ENCODE measurements at regions of chr19 and their contacts with region 1.

Region 1: DNA sequence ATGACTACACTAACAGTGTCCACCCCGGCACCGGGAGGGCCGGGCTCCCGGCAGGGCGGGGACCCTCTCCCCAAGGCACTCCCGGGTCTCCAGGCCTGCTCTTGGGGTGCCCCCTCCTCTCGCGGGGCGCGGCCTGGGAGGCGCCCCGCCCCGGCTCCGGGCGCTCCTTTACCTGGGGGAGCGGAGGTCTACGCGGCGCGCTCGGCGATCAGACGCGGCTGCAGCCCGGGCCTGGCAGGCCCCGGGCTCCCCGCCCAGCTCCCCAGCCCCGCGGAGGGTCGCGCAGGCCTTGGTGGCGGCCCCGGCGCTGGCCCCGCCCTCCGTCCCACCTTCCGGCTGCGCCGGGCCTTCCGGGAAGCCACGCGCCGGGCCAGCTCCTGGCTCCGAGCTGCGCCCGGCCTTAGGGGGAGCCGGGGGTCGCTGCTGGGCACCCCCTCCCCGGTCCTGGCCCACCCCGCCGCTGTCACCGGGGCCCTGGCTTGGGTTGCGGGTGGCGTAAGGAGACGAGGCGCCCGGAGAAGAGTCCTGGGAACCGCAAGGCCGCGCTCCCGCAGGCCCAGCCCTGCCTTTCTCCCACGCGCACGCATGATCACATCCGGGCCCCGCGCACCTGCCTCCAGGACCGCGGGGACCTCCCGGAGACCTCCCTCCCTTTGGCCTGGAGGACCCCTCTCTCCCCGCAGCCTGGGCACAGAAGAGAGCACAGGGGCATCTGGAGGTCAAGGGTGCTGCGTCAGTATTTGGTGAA is at the start of gene C19orf12:
- DNase-seq: peak; percentile 80
- ATAC-seq: peak; percentile 69
- H3K4me3 Mint-ChIP-seq: peak within 1 kb of the TSS; percentile 96
- H3K27ac Mint-ChIP-seq: peak within 1 kb of the TSS; percentile 98
- H3K4me1 Mint-ChIP-seq: peaks cover 53% of the 10 kb centered on the region
- H3K27me3 Mint-ChIP-seq: no peaks in the 10 kb centered on the region
- total RNA-seq, gene C19orf12: 43.6 to 44.1 TPM

Region 2: DNA sequence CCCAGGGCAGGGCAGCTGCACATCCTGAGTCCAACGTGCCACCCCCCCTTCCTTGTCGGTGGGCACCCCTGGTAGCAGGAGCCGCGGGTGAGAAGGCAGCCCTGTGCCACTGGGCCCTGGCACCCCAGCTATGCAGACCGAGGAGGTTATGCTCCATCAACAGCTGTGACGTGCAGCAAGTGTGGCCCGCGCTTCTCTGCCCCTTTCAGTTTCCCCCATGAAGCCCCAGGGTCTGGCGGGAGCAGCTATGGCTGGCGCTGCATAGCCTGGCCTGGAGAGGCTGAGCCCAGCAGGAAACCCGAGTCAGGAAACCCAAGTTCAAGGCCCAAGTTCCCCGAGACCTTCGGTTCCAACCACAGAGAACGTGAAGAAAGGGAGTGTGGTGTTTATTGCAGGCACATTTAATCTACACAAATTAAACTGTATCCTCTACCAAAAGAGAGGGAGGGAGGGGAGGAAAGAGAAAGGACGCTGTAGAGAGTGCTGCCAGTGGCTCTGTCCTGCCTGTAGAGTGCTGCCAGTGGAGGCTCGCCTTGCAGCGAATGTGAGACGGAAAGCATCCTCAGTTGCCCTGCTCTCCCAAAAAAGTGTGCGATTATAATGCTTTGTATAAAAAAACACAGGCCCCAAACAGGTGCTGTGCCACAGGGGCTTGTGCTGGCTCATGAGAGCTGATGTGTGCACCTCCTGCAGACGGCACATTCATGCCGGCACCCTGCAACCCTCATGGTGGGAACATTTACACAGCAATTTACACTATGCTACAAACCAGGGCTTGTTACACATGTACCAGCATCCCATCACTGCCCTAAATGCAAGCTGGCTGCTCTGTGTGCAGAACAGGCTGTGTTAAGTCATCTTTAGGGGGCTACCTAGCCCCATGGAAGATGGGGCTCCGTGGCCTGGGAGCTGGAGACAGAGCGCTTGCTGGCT is 92.7 kb before region 1 on chr19:
- CTCF ChIA-PET with region 1: interaction called, 25 read pairs
- DNase-seq: peak; percentile 73
- ATAC-seq: peak; percentile 48
- H3K4me3 Mint-ChIP-seq: peak overlapping the region; percentile 87
- H3K27ac Mint-ChIP-seq: peak overlapping the region; percentile 97
- H3K4me1 Mint-ChIP-seq: peaks cover 70% of the 10 kb centered on the region
- H3K27me3 Mint-ChIP-seq: no peaks in the 10 kb centered on the region

Region 3: DNA sequence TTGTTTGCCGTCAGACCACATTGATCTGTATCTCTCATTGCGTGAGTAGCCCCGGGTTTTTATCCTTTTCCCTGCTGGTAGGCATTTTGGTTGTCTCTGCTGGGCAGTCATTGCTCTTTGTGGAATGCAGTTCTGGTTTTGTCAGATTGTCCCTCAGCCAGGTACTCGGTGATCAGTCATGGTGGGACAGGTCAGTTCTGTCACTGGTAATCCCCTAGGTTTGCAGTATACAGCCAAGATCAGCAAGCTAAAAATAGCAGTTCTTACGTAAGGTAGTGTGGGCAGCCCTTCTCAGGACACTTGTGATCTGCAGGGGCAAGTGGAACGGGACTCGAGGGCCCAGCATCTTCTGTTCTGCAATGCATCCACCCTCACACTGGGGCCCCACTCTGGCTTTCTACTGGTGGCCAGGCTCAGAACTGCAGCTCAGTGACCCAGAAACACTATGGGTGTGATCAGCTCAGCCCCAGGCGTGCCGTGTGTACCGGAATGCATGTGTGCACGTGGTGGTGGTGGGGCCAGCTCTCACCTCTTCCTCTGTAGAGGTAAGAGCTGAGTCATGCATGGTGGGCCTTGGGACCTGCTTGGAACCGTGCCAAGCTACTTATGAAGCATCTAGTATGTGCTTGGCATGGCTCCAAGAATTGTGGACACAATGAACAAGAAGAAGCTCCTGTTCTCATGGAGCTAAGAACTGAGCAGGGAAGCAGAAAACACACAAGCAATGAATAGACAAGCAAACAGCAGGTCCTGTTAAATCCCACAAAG is 43.5 kb before region 1 on chr19:
- CTCF ChIA-PET with region 1: interaction called, 109 read pairs
- DNase-seq: peak; percentile 98
- ATAC-seq: peak; percentile 77
- H3K4me3 Mint-ChIP-seq: peak overlapping the region; percentile 64
- H3K27ac Mint-ChIP-seq: peak overlapping the region; percentile 90
- H3K4me1 Mint-ChIP-seq: peaks cover 91% of the 10 kb centered on the region
- H3K27me3 Mint-ChIP-seq: no peaks in the 10 kb centered on the region

Region 4: GRCh38 chr19:29694669-29695627 is 20.2 kb before region 1 on chr19:
- CTCF ChIA-PET with region 1: interaction called, 193 read pairs
- DNase-seq: peak; percentile 89
- ATAC-seq: peak; percentile 98
- H3K4me3 Mint-ChIP-seq: no peak overlapping the region
- H3K27ac Mint-ChIP-seq: peak overlapping the region; percentile 32
- H3K4me1 Mint-ChIP-seq: peaks cover 16% of the 10 kb centered on the region
- H3K27me3 Mint-ChIP-seq: no peaks in the 10 kb centered on the region

Region 5: DNA sequence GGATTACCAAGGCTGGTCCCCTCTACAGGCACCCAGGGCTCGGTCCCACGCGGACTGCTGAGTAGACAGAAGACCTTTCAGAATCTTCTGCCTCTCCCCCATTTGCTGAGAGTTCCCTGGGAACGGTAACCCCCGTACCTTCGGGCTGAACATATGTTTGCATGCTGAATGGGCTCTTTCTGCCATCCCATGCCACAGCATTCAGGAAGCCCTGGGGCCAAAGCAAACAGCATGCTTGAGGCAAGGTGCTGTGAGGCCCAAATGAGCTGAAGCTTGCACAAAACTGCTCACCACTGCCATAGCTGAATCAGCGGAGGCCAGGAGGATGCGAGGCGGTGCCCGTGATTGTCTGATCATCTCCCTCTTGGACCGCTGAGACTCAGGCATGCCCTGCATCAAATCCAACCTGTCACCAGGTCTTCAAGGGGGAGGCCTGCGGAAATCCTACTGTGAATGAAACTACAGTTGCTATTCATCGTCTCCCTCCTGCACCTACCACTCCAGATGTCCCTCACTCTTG is 16.3 kb after region 1 on chr19:
- CTCF ChIA-PET with region 1: interaction called, 22 read pairs
- DNase-seq: no peak
- ATAC-seq: no peak
- H3K4me3 Mint-ChIP-seq: no peak overlapping the region
- H3K27ac Mint-ChIP-seq: no peak overlapping the region
- H3K4me1 Mint-ChIP-seq: no peaks in the 10 kb centered on the region
- H3K27me3 Mint-ChIP-seq: peaks cover 38% of the 10 kb centered on the region

Region 6: DNA sequence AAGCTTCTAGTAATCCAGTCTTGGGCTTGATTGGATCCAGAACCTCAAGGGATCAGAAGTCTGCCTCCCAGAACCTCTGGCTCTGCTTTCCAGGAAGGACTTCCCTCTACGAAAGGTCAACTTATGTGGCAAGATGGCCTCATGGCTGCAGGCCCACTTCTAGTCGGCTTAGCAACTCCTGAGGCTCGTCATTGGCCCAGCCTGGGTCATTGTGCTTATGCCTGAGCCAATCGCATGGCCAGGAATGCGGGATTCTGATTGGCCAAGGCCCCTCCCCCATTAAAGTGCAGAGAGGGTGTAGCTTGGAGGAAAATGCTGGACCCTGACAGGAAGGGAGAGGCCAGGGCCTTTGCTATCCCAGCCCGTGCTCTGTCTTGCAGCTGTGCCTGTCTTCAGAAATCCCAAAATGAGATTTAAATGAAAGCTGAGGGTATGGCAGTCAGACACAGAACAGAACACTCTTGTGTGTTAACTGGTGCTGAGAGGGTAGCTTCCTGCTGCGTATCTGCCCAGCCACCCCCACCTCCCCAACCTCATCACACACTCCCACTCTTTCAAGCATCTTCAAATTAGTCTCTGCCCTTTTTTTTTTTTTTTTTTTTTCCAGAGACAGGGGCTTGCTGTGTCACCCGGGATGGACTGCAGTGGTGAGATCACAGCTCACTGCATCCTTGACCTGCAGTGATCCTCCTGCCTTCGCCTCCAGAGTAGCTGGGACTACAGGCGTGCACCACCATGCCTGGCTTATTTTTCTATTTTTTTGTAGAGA is 91.2 kb after region 1 on chr19:
- CTCF ChIA-PET with region 1: no interaction called
- DNase-seq: no peak
- ATAC-seq: no peak
- H3K4me3 Mint-ChIP-seq: no peak overlapping the region
- H3K27ac Mint-ChIP-seq: no peak overlapping the region
- H3K4me1 Mint-ChIP-seq: peaks cover 15% of the 10 kb centered on the region
- H3K27me3 Mint-ChIP-seq: no peaks in the 10 kb centered on the region

Measured in activated CD8-positive, alpha-beta memory T cell treated with anti-CD3 and anti-CD28 coated beads, Interleukin-2, amount 10 ng/mL, durations not matched to agents 7 days and 5 days (primary cell).